ENCODE measurements at regions of chr1 and their contacts with region 1.

Region 1: DNA sequence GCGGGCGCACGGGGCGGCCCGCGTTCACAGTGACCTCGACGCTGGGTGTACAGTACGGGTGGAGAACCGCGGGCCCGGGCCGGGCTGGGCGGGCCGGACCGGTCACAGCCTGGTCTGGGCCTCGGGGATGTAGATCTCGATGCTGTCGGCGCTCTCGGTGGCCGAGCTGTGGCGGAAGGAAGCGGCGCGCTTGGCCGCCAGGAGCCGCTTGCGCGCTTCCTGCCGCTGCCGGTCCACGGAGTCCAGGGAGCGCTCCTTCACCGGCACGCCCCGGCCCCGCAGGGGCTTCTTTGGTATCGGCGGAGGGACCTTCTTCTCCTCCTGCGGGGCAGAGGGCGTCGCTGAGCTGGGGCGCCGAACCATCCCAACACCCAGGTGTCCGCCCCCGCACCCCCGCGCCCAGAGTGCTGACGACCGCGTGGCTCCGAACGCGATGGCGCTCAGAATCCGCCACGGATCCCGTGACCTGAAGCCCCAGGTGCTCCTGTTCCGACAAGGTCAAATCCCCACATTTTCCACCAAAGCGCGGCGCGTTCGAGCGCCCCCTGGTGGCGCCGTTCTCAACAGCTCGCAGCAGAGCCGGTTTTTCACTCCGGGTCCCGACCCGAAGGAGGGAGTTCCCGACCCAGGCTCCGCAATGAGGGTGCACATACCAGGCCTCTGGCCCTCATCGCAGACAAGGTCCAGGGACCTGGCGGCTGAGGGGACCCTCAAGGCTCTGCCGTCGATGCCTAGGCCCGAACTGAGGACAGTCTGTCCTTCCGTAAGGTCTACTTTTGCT is 6.6 kb upstream of the SMIM12 start:
- DNase-seq: peak; percentile 92
- ATAC-seq: peak; percentile 72
- H3K4me3 Mint-ChIP-seq: peak overlapping the region; percentile 75
- H3K27ac Mint-ChIP-seq: peak overlapping the region; percentile 90
- H3K4me1 Mint-ChIP-seq: peaks cover 38% of the 10 kb centered on the region
- H3K27me3 Mint-ChIP-seq: peaks cover 7% of the 10 kb centered on the region

Region 2: DNA sequence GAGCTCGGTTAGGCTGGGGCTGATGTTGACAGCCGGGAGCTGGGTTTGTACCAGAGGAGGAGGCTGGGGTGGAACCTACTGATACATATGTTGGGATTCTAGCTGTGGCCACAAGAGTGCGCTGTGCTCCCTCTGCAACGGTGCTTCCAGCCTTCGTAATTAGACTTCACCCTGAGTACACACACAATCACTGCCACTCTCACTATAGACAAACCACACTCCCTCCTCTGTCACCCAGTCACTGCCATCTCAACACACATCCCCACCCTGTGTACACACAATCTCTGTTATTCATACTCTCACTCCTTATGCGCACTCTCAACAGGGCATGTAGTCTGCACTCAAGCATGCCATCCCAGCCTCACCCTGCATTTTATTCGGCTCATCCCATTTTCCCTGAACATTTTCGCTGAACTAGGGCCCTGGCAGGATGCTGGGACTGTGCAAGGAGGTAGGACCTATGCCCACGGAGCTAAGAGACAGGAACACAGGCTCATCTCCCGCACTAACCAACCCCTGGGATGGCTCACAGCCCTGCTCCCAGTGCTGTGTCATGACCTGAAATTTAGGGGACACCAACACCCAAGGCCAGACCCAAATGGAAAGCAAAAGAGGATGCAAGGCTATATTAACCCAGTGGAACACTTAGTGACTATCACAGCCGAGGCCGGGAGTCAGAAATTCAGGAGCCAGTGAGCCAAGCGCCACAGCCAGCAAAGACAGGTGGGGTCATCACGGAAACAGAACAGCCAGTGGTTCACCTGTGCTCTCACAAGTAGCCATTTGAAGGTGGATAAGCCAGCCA is 79.4 kb before region 1 on chr1:
- CTCF ChIA-PET with region 1: interaction called, 12 read pairs
- POLR2A ChIA-PET with region 1: no interaction called
- DNase-seq: peak; percentile 78
- ATAC-seq: peak; percentile 82
- H3K4me3 Mint-ChIP-seq: no peak overlapping the region
- H3K27ac Mint-ChIP-seq: no peak overlapping the region
- H3K4me1 Mint-ChIP-seq: peaks cover 2% of the 10 kb centered on the region
- H3K27me3 Mint-ChIP-seq: peaks cover 21% of the 10 kb centered on the region

Region 3: DNA sequence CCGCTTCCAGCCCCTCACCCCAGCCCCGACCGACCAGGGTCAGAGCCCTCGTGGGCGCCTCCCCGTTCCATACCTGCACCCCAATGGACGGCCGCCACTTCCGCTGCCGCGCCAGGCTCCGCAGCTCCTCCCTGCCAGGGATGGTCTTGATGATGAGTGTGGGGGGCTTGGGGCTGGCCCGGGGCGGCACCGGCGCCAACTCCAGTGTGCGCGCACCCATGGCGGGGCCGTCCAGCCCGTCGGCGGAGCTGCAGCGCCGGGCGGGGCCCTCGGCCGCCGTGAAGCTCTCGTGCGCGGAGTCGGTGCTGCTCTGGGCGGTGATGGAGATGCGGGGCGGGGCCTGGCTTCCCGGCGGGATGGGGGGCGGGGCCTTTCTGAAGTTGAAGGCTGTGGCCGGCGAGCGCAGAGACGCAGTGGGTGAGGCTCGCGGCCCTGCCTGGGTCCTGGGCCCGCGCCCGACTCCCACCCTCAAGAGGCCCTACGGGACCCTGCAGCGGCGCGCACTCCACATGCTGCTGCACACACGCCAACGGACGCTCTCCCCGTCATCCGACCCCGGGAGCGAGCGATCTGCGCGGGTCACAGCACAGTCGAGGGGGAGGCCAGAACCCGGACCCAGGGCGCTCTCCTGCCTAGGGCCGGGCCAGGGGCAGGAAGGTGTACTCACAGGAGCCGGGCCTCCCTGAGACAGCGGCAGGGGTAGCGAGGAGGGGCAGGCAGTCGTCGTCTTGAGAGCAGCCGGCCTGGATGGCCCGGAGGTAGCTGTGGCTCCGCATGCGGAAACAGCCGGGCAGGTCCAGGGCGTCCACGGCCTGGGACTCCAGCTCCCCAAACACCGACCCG is 19.5 kb after region 1 on chr1:
- CTCF ChIA-PET with region 1: interaction called, 10 read pairs
- POLR2A ChIA-PET with region 1: interaction called, 8 read pairs
- DNase-seq: peak; percentile 59
- ATAC-seq: peak; percentile 92
- H3K4me3 Mint-ChIP-seq: peak overlapping the region; percentile 62
- H3K27ac Mint-ChIP-seq: no peak overlapping the region
- H3K4me1 Mint-ChIP-seq: peaks cover 4% of the 10 kb centered on the region
- H3K27me3 Mint-ChIP-seq: peaks cover 43% of the 10 kb centered on the region

Region 4: GRCh38 chr1:35085421-35085820 is 219.2 kb after region 1 on chr1:
- CTCF ChIA-PET with region 1: no interaction called
- POLR2A ChIA-PET with region 1: no interaction called
- DNase-seq: no peak
- ATAC-seq: no peak
- H3K4me3 Mint-ChIP-seq: no peak overlapping the region
- H3K27ac Mint-ChIP-seq: no peak overlapping the region
- H3K4me1 Mint-ChIP-seq: peaks cover 10% of the 10 kb centered on the region
- H3K27me3 Mint-ChIP-seq: no peaks in the 10 kb centered on the region